ENCODE measurements at regions of chr2 and their contacts with region 1.

Region 1: DNA sequence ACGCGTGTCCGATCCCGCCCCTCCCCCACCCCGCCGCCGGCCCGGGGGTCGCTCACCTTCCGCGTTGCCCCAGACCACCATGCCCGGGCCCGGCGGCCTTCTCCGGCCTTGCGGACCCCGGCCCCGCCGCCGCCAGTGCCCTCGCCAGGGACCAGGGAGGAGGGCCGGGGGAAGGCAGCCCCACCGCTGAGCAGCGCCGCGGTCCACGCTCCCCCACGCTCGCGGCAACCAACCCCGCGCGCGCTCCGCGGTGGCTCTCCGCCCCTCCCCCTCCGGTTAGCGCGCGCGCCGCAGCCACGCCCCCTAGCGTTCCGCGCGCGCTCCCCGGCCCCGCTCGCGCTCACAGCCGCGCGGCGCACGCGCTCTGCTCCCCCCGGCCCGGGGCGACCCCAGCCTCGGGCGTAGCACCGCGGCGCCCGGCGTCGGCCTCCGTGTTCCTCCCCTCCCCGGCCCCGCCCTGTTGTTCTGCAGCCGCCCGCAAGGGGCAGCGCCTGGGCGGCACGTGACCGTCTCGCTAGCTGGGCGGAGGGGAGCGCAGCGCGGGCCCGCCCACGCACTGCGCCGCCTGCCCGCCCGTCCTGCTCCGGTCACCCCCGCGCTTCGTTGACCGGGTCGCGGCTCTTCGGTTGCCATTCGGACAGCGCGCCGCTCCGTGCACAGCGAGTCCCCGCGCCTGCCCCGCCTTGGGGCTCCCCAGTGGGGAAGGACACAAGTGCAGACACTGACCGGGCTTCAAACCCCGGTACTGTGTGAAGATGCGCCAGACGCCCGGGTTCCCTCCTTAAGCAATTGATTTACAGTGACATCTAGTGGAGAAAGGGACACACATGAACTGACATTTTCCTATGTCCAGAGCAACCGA is at the start of gene REV1:
- DNase-seq: peak; percentile 87 to 94
- H3K4me3 ChIP-seq: peak within 1 kb of the TSS; percentile 79 to 94
- H3K27ac ChIP-seq: peak within 1 kb of the TSS; percentile 86 to 98
- H3K4me1 ChIP-seq: peaks cover 0 to 26% (median 13%) of the 10 kb centered on the region in 4 donors
- H3K27me3 ChIP-seq: no peaks in the 10 kb centered on the region
- CTCF ChIP-seq: peak; percentile 76 to 90

Region 2: GRCh38 chr2:99154643-99155536 is 335.1 kb before region 1 on chr2 and contains the starts of genes LIPT1 and TSGA10:
- intact Hi-C with region 1: no loop called
- DNase-seq: peak; percentile 90 to 96
- H3K4me3 ChIP-seq: peak within 1 kb of the TSS; percentile 80 to 82
- H3K27ac ChIP-seq: peak within 1 kb of the TSS; percentile 84
- H3K4me1 ChIP-seq: peaks cover 0 to 22% (median 11%) of the 10 kb centered on the region in 4 donors
- H3K27me3 ChIP-seq: no peaks in the 10 kb centered on the region
- CTCF ChIP-seq: no peak

Region 3: DNA sequence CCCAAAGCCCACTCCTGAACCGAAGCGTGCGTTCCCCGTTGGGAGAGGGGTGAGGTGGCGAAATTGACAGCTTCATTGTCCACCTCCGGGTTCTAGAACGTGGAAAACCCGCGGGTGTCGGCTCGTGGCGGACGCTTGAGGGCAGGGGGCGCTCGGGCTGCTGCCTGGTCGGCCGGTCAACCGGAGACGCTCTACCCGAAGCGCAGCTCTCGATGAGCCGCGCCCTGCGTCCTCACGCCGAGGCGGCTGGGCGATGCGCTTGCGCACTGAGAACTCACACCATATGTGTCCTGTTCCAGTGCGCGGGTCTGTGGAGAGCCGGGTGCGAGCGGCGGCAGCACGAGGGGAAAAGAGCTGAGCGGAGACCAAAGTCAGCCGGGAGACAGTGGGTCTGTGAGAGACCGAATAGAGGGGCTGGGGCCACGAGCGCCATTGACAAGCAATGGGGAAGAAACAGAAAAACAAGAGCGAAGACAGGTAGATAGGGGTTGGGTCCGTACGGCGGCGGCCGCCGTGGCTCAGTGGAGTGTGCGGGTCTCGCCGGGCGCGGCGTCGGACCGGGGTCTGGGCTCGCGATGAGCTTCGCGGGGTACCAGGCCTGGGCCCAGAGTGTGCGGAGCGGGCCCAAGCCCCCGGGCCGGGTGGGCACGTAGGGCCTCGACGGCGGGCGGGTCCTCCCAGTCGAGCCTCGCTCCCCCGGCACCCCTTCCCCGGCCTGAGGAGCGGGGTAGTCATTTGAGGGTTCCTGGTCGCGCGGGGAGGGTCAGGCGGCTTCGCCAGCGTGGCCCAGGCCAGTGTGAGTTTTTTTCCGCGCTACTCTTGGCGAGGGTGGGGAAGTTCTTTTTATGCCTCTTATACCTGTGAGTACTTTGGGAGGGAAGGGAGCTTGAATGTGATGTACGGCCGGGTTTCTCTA is 152.6 kb before region 1 on chr2 and contains the start of gene EIF5B:
- intact Hi-C with region 1: loop called (anchors 2 kb)
- DNase-seq: peak; percentile 95 to 98
- H3K4me3 ChIP-seq: peak within 1 kb of the TSS; percentile 82 to 96
- H3K27ac ChIP-seq: peak within 1 kb of the TSS; percentile 90 to 94
- H3K4me1 ChIP-seq: peaks cover 0 to 39% (median 28%) of the 10 kb centered on the region in 4 donors
- H3K27me3 ChIP-seq: no peaks in the 10 kb centered on the region
- CTCF ChIP-seq: peak; percentile 57

Region 4: GRCh38 chr2:99648178-99648844 is 158.3 kb after region 1 on chr2:
- intact Hi-C with region 1: no loop called
- DNase-seq: peak; percentile 57 to 73
- H3K4me3 ChIP-seq: no peak overlapping the region
- H3K27ac ChIP-seq: peak overlapping the region; percentile 58 to 76
- H3K4me1 ChIP-seq: peaks cover 0 to 42% (median 16%) of the 10 kb centered on the region in 4 donors
- H3K27me3 ChIP-seq: no peaks in the 10 kb centered on the region
- CTCF ChIP-seq: no peak

Region 5: DNA sequence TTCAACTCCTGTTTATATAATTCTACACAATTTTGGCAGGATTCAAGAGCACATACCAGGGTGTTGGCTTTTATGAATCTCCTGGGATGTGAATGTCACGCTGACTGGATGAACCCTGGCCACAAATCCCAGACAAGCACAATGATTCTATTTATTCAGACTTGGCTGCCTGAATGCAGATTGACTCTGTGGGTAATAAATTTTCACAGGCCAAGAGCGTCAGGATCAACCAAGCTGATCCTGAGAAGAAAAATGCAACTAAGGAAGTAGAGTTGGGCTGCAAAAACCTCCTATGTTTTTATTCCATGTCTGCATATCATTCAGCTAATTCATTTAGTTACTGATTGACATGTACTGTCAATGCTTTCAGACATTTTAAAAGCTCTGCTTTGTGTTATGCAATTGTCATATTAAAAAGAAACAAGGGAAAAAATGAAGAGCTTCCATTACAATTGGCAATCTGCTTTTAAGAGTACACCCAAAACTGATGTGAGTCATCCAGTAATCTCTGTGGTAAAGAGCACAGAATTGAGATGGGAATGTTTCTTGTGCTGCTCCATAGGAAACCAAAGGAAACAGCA is 172.9 kb after region 1 on chr2:
- intact Hi-C with region 1: no loop called
- DNase-seq: peak; percentile 38 to 78
- H3K4me3 ChIP-seq: no peak overlapping the region
- H3K27ac ChIP-seq: peak overlapping the region; percentile 43 to 46
- H3K4me1 ChIP-seq: peaks cover 0 to 70% (median 45%) of the 10 kb centered on the region in 4 donors
- H3K27me3 ChIP-seq: no peaks in the 10 kb centered on the region
- CTCF ChIP-seq: no peak

Measured in tibial artery (tissue), 4 donors.